CD4-positive, alpha-beta T cell (primary cell): ENCODE measurements at regions of chr2 and their contacts with region 1.

Region 1: DNA sequence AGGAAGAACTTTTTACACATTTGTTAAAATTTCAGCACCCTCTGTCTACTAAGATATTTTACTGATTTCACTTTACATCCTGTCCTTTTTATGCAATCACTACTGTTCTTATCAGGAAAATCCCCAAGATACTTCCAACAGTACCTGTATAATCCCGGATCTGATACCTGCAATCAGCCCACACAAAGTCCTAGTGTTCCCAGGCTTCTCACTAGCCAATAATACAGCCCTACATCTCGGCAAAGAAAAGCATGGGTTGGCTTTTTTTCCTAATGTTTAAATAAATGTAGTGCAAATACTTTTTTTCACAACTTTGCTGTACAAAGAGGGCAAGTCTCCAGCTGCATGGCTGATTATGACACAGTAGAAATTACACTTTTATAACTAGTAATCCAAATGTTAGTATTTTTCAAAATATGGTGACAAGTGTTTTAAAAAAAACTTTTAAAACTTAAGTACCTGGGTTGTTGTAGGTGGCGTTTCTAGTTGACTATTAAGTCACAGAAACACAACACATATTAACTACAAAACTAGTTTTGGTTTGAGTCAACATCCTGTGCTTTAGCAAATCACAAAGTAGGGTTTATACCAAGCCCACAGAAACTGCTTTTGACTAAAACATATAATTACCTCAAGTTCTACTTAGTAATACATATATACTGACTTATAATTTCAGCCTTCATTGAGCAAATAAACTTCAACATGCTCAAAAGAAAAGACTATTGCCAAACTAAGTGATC is 19.5 kb downstream of the CNOT11 start:
- DNase-seq: peak in 1 of 14 experiments; percentile 37
- ATAC-seq: peak; percentile 32
- H3K4me3 ChIP-seq: no peak overlapping the region
- H3K4me3 Mint-ChIP-seq: no peak overlapping the region
- H3K27ac ChIP-seq: peak overlapping the region in 1 of 2 donors; percentile 25
- H3K27ac Mint-ChIP-seq: peak overlapping the region; percentile 79
- H3K4me1 ChIP-seq: peaks cover 9% of the 10 kb centered on the region
- H3K4me1 Mint-ChIP-seq: peaks cover 55% of the 10 kb centered on the region
- H3K27me3 ChIP-seq: no peaks in the 10 kb centered on the region
- H3K27me3 Mint-ChIP-seq: no peaks in the 10 kb centered on the region
- CTCF ChIP-seq: no peak

Region 2: GRCh38 chr2:101258804-101259203 is 13.4 kb before region 1 on chr2:
- CTCF ChIA-PET with region 1: interaction called, 5 read pairs
- POLR2A ChIA-PET with region 1: interaction called, 21 read pairs
- intact Hi-C with region 1: loop called in 1 of 2 experiments (anchors 2 kb)
- DNase-seq: no peak
- ATAC-seq: no peak
- H3K4me3 ChIP-seq: no peak overlapping the region
- H3K4me3 Mint-ChIP-seq: peak overlapping the region; percentile 1
- H3K27ac ChIP-seq: no peak overlapping the region
- H3K27ac Mint-ChIP-seq: peak overlapping the region; percentile 65
- H3K4me1 ChIP-seq: peaks cover 34% of the 10 kb centered on the region
- H3K4me1 Mint-ChIP-seq: peaks cover 64% of the 10 kb centered on the region
- H3K27me3 ChIP-seq: no peaks in the 10 kb centered on the region
- H3K27me3 Mint-ChIP-seq: no peaks in the 10 kb centered on the region
- CTCF ChIP-seq: no peak

Region 3: GRCh38 chr2:101291973-101292372 is 19.8 kb after region 1 on chr2:
- CTCF ChIA-PET with region 1: interaction called, 3 read pairs
- POLR2A ChIA-PET with region 1: interaction called, 3 read pairs
- intact Hi-C with region 1: loop called in 1 of 2 experiments (anchors 2 kb)
- DNase-seq: no peak
- ATAC-seq: no peak
- H3K4me3 ChIP-seq: no peak overlapping the region
- H3K4me3 Mint-ChIP-seq: no peak overlapping the region
- H3K27ac ChIP-seq: no peak overlapping the region
- H3K27ac Mint-ChIP-seq: no peak overlapping the region
- H3K4me1 ChIP-seq: peaks cover 22% of the 10 kb centered on the region
- H3K4me1 Mint-ChIP-seq: peaks cover 55% of the 10 kb centered on the region
- H3K27me3 ChIP-seq: no peaks in the 10 kb centered on the region
- H3K27me3 Mint-ChIP-seq: no peaks in the 10 kb centered on the region
- CTCF ChIP-seq: no peak

Region 4: DNA sequence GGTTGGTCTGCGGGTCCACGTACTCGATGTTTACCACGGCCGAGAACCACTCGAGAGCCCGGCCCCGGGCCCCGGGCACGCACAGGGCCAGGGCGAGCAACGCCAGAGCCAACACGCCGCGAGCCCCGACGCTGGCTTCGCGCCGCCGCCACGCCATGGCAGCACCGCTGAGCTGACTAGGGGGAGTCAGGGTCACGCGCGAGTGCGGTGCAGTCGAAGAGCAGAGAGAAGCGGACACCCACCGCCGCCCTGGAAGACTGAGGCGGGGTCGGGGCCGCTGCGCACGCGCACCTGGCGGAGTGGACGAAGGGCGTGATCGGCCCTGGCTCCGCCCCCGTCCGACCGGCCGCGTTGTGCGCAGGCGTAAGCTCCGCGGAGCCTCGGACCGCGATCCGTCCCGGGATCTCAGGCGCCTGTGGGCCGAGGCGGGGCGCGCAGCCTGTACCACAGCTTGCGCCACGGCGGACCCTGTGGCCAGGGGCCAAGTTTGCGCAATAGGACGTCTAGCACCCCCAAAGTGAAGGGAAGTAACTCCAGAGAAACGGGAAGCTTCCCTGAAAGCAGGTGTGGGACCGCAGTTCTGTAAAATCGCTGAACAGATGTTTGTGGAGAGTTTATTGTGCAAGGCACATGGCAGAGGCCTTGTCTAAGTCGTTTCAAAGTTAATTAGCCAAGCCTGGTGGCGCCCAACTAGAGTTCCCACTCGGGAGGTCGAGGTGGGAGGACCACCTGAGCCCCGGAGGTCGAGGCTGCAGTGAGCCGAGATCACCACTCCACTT is 36.4 kb after region 1 on chr2 and contains the start of gene RNF149:
- CTCF ChIA-PET with region 1: interaction called, 3 read pairs
- POLR2A ChIA-PET with region 1: interaction called, 4 read pairs
- intact Hi-C with region 1: loop called in 1 of 2 experiments (anchors 5 kb)
- DNase-seq: peak; percentile 82 to 95 (median 93)
- ATAC-seq: peak; percentile 56
- H3K4me3 ChIP-seq: peak within 1 kb of the TSS; percentile 90
- H3K4me3 Mint-ChIP-seq: peak within 1 kb of the TSS; percentile 98
- H3K27ac ChIP-seq: peak within 1 kb of the TSS; percentile 85 to 95
- H3K27ac Mint-ChIP-seq: peak within 1 kb of the TSS; percentile 96
- H3K4me1 ChIP-seq: peaks cover 67% of the 10 kb centered on the region
- H3K4me1 Mint-ChIP-seq: peaks cover 79% of the 10 kb centered on the region
- H3K27me3 ChIP-seq: no peaks in the 10 kb centered on the region
- H3K27me3 Mint-ChIP-seq: no peaks in the 10 kb centered on the region
- CTCF ChIP-seq: no peak
- total RNA-seq, gene RNF149: 139 to 150 TPM